GM12878 (cell line): ENCODE measurements at regions of chr7 and their contacts with region 1.

Region 1: GRCh38 chr7:37352974-37353948 is 95.4 kb downstream of the ELMO1 start:
- DNase-seq: no peak
- ATAC-seq: peak; percentile 89
- H3K4me3 ChIP-seq: peak overlapping the region; percentile 72
- H3K27ac ChIP-seq: peak overlapping the region; percentile 52; the same call in 1 of the 2 replicates
- H3K4me1 ChIP-seq: peaks cover 17% of the 10 kb centered on the region
- H3K27me3 ChIP-seq: no peaks in the 10 kb centered on the region
- CTCF ChIP-seq: peak; percentile 94 to 98 (median 97)
- EP300 ChIP-seq: no peak
- POLR2A ChIP-seq: no peak
- RAD21 ChIP-seq: peak; percentile 97

Region 2: DNA sequence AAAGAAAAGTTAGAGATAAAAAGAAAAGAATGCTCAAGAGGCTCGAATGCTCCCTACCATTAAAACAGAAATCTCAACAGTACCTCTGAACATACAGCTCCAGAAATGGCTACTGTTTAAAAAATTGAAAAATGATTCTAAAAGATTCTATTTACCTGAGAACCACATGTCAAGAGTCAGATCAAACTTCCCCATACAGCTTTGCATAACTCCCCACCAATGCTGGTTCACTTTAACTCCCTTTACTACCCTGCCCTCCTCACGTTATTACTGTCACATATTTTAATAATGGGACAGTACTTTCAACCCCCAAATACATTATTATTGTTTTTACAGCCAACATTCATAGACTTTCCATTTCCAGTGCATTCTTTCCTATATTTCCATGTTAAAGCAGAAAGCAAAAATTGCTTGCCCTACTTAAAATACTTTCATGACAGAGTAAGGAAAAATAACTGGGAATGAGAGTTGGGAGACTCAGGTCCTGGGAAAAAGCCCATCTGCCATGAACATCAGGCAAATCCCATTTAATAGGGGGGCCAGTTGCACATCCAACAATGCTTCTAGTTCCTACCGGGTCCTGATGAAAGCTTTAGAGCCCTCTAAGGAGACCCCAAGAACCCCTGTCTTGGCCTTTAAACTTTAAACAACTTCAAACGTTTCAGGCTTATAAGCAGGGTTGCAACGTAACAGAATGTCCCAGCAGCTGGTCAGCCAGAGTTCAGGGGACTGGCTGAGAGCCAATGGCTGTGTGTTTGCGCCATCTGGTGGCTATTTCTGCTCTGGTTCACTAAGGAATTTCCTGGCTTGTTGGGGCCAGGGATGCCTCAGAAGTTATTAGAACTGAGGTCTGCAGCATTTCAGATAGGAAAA is 152.0 kb before region 1 on chr7:
- CTCF ChIA-PET with region 1: interaction called, 59 read pairs
- POLR2A ChIA-PET with region 1: no interaction called
- RAD21 ChIA-PET with region 1: interaction called, 3 read pairs
- SMC1A ChIA-PET with region 1: interaction called, 39 read pairs
- in situ Hi-C with region 1: no loop called
- intact Hi-C with region 1: no loop called
- DNase-seq: no peak
- ATAC-seq: peak; percentile 90
- H3K4me3 ChIP-seq: no peak overlapping the region
- H3K27ac ChIP-seq: no peak overlapping the region
- H3K4me1 ChIP-seq: 0 out of 2 replicates have a peak, but pooled peaks cover 3% of the 10 kb centered on the region
- H3K27me3 ChIP-seq: no peaks in the 10 kb centered on the region
- CTCF ChIP-seq: peak; percentile 76 to 85 (median 80)
- EP300 ChIP-seq: no peak
- POLR2A ChIP-seq: no peak
- RAD21 ChIP-seq: peak; percentile 69

Region 3: GRCh38 chr7:37216156-37216852 is 137.0 kb before region 1 on chr7:
- CTCF ChIA-PET with region 1: interaction called, 6 read pairs
- POLR2A ChIA-PET with region 1: no interaction called
- RAD21 ChIA-PET with region 1: interaction called, 10 read pairs
- SMC1A ChIA-PET with region 1: interaction called, 11 read pairs
- in situ Hi-C with region 1: loop called (anchors 10 kb)
- intact Hi-C with region 1: no loop called
- DNase-seq: no peak
- ATAC-seq: no peak
- H3K4me3 ChIP-seq: no peak overlapping the region
- H3K27ac ChIP-seq: no peak overlapping the region
- H3K4me1 ChIP-seq: peaks cover 6% of the 10 kb centered on the region
- H3K27me3 ChIP-seq: no peaks in the 10 kb centered on the region
- CTCF ChIP-seq: no peak
- EP300 ChIP-seq: no peak
- POLR2A ChIP-seq: no peak
- RAD21 ChIP-seq: no peak

Region 4: DNA sequence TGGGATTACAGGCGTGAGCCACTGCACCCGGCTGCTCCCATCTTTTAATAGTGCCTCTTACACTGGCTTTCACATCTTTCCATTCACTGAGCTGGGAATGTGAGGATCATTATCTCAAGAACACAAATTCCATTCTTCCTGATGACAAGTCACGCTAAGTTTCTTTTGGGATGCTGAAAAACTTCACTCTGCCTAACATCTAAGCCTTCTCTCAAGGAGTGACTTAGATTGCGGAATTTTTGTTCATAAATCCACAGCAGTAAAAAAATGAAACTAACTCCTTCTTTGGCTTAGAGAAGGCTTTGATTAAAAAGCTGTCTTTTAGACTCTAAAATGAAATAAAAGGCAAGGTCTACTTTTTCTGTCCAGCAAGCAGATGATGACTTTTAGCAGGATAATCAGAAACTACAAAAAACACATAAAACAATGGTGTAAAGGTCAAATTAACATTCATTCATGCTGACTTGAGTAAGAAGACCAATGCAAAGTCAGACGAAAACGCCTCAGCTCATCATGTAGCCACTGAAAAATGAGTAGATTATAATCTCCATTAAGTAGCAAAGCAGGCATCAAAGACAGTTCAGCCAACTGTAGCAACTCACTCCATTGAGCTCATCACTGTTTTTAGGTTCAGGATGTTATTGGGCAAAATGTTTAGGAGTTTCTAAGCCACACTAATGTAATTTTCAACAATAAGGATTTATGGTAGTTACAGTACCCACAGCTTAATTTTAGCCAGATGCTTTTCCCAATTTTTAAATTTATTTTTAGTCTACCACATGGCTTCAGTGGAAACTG is 83.4 kb before region 1 on chr7:
- CTCF ChIA-PET with region 1: interaction called, 6 read pairs
- POLR2A ChIA-PET with region 1: no interaction called
- RAD21 ChIA-PET with region 1: interaction called, 4 read pairs
- SMC1A ChIA-PET with region 1: interaction called, 14 read pairs
- in situ Hi-C with region 1: no loop called
- intact Hi-C with region 1: no loop called
- DNase-seq: no peak
- ATAC-seq: no peak
- H3K4me3 ChIP-seq: no peak overlapping the region
- H3K27ac ChIP-seq: no peak overlapping the region
- H3K4me1 ChIP-seq: peaks cover 6% of the 10 kb centered on the region; the same call in 1 of the 2 replicates
- H3K27me3 ChIP-seq: no peaks in the 10 kb centered on the region
- CTCF ChIP-seq: no peak
- EP300 ChIP-seq: no peak
- POLR2A ChIP-seq: no peak
- RAD21 ChIP-seq: no peak

Region 5: DNA sequence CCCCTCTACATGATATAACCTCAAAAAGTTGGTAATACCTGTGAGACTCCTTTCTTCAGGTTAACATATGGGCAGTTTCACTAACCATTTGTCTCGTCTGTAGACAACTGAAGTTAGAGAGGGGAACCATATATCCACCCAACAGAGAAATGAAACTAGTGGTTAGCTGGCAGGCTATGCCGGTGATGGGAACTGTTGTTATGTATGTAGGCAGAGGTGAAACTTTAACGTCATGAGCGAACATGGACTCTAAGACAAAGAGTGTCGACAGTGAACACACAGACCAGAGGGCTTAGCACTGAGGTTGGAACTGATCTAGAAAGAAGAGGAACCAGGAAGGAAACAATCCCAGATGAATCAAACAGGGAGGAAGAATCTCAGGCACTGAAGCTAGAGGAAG is 17.0 kb before region 1 on chr7:
- CTCF ChIA-PET with region 1: interaction called, 64 read pairs
- POLR2A ChIA-PET with region 1: interaction called, 3 read pairs
- RAD21 ChIA-PET with region 1: interaction called, 32 read pairs
- SMC1A ChIA-PET with region 1: interaction called, 17 read pairs
- in situ Hi-C with region 1: no loop called
- intact Hi-C with region 1: no loop called
- DNase-seq: peak; percentile 94
- ATAC-seq: peak; percentile 85
- H3K4me3 ChIP-seq: no peak overlapping the region; the same call in 1 of the 2 replicates
- H3K27ac ChIP-seq: peak overlapping the region; percentile 90
- H3K4me1 ChIP-seq: peaks cover 24% of the 10 kb centered on the region
- H3K27me3 ChIP-seq: no peaks in the 10 kb centered on the region
- CTCF ChIP-seq: no peak
- EP300 ChIP-seq: peak; percentile 80 to 82; a peak in 3 of 4 replicates
- POLR2A ChIP-seq: no peak
- RAD21 ChIP-seq: no peak; the same call in 1 of the 2 replicates

Region 6: GRCh38 chr7:37448636-37449361 is 95.5 kb after region 1 on chr7 and contains the start of gene ELMO1:
- CTCF ChIA-PET with region 1: interaction called, 4 read pairs
- POLR2A ChIA-PET with region 1: no interaction called
- RAD21 ChIA-PET with region 1: interaction called, 4 read pairs
- SMC1A ChIA-PET with region 1: interaction called, 4 read pairs
- in situ Hi-C with region 1: no loop called
- intact Hi-C with region 1: loop called (anchors 2 kb)
- DNase-seq: peak; percentile 42
- ATAC-seq: peak; percentile 97
- H3K4me3 ChIP-seq: peak within 1 kb of the TSS; percentile 71
- H3K27ac ChIP-seq: peak within 1 kb of the TSS; percentile 10; the same call in 1 of the 2 replicates
- H3K4me1 ChIP-seq: peaks cover 7% of the 10 kb centered on the region
- H3K27me3 ChIP-seq: no peaks in the 10 kb centered on the region; a peak in 1 of 4 replicates
- CTCF ChIP-seq: peak; percentile 28 to 52 (median 31); a peak in 4 of 6 replicates
- EP300 ChIP-seq: peak in 1 of 2 experiments; percentile 54; a peak in 1 of 4 replicates
- POLR2A ChIP-seq: peak; percentile 73
- RAD21 ChIP-seq: no peak
- polyA plus RNA-seq, gene ELMO1: 22.6 to 26.1 TPM

Region 7: DNA sequence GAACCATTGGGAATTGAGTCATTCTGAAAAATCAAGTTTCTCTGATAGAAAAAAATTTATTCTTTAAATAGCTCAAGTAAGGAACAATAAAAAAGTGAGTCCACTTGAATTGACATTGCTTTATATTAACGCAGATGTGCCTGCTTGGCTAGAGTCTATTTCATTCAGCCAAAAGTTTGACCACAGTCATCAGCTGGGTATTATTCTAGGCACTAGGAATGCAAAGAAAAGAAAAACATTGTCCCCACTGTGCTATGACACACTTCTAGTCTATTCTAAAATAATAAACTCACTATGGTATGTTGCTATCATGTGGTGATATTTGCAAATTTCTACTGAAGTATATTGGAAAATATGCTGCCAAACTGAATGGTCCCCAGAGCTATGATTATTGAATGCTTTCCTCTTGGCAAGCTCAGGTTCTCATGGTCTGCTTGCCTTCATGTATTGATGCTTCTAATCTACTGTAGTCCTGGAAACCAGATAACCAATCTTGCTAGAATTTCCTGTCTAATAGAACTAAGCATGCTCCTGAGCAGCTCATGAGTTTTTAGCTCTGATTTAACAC is 555.0 kb after region 1 on chr7:
- CTCF ChIA-PET with region 1: no interaction called
- POLR2A ChIA-PET with region 1: no interaction called
- RAD21 ChIA-PET with region 1: no interaction called
- SMC1A ChIA-PET with region 1: no interaction called
- in situ Hi-C with region 1: no loop called
- intact Hi-C with region 1: no loop called
- DNase-seq: no peak
- ATAC-seq: no peak
- H3K4me3 ChIP-seq: no peak overlapping the region
- H3K27ac ChIP-seq: no peak overlapping the region
- H3K4me1 ChIP-seq: no peaks in the 10 kb centered on the region
- H3K27me3 ChIP-seq: peaks cover under 1 to 2% of the 10 kb centered on the region in 2 experiments; a peak in 1 of 4 replicates
- CTCF ChIP-seq: no peak
- EP300 ChIP-seq: no peak
- POLR2A ChIP-seq: no peak
- RAD21 ChIP-seq: no peak